Heart right ventricle (tissue), 16 donors: ENCODE measurements at regions of chr19 and their contacts with region 1.

Region 1: GRCh38 chr19:49391581-49392399 is 3.7 kb downstream of the KASH5 start:
- DNase-seq: peak; percentile 73 to 80
- ATAC-seq: peak; percentile 68 to 91 (median 84)
- H3K4me3 ChIP-seq: no peak overlapping the region
- H3K27ac ChIP-seq: no peak overlapping the region
- H3K4me1 ChIP-seq: peaks cover 0 to 6% (median 0%) of the 10 kb centered on the region in 9 donors
- H3K27me3 ChIP-seq: peaks cover 4 to 48% (median 9%) of the 10 kb centered on the region in 7 donors
- CTCF ChIP-seq: peak; percentile 65 to 90 (median 83)

Region 2: GRCh38 chr19:49436369-49437017 is 44.7 kb after region 1 on chr19:
- intact Hi-C with region 1: loop called in 2 of 10 experiments (anchors 5 kb)
- DNase-seq: no peak
- ATAC-seq: no peak
- H3K4me3 ChIP-seq: no peak overlapping the region
- H3K27ac ChIP-seq: no peak overlapping the region
- H3K4me1 ChIP-seq: peaks cover 0 to 6% (median 0%) of the 10 kb centered on the region in 9 donors
- H3K27me3 ChIP-seq: peaks cover 16 to 98% (median 94%) of the 10 kb centered on the region in 7 donors
- CTCF ChIP-seq: no peak

Region 3: DNA sequence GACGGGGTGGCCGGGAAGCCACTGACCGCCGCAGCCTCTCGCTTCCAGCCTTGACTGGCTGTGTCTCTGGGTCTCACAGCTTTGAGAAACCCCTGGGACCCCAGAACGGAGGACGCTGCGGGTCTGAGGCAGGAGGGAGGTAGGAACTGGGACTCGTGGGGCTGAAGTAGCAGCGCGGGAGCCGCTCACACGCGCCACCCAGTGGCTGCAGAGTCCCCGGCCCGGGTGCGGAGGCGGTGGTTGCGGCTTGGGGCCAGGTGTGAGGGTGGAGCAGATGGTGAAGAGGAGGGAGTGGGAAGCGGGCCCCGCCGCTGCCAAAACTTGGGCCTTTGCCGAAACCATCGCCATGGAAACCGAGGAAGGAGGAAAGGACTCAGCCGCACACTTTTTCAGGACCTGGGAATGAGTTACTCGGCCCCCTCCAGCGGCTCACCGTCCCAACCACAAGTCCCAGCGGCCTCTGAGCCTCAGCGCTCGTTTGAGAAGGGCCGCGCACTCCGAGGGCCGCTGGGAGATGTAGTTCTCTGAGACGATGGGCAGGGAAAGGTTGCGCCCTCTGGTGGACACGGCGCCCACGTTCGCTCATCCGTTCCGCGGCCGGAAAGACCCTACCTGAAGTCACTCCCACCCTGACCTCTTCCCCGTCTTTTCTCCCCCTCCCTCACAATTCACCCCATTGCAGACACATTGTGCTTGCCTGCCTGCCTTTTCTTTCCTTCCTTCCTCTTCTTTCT is 51.7 kb after region 1 on chr19:
- intact Hi-C with region 1: loop called (anchors 1 to 5 kb)
- DNase-seq: peak; percentile 94 to 96
- ATAC-seq: peak; percentile 86 to 95 (median 93)
- H3K4me3 ChIP-seq: peak overlapping the region; percentile 60 to 93 (median 69)
- H3K27ac ChIP-seq: peak overlapping the region; percentile 55 to 92 (median 86)
- H3K4me1 ChIP-seq: peaks cover 0 to 23% (median 6%) of the 10 kb centered on the region in 9 donors
- H3K27me3 ChIP-seq: peaks cover 8 to 40% (median 36%) of the 10 kb centered on the region in 7 donors
- CTCF ChIP-seq: peak; percentile 65 to 89 (median 80)

Region 4: DNA sequence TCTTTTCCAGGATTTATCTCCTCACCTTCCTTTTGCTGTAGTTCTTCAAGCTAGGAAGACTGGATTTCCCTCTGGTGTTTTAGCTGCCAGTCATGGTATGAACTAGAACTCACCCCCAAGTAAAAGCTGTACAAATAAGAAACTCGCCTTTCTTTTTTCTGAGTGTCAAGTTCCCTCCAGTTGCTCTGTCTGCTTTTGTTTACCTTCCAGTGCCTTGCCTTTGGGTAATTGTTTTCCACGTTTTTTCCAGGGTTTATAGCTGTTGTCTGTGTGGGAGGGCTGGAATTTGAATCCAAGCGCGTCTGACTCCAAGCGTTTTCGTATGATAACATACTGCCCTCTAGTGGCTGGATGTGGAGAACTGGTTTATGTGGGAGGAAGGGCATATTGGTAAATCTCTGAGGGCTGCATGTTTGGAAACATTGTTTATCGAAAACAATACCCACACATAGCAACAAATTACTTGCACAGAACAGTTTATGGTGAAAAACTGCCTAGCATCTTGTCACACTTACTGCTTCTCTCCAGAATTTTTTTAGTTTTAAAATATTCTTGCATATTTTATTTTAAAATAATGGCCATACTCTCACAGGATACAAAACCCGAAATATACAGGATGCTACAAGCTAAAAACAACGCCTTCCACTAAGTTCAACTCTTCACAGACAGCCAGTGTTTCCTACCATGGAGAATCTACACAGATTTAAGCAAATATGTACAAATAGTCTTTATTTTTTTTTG is 155.2 kb after region 1 on chr19:
- intact Hi-C with region 1: loop called in 2 of 10 experiments (anchors 5 to 10 kb)
- DNase-seq: peak in 1 of 2 donors; percentile 89
- ATAC-seq: peak; percentile 56 to 91 (median 83)
- H3K4me3 ChIP-seq: no peak overlapping the region
- H3K27ac ChIP-seq: no peak overlapping the region
- H3K4me1 ChIP-seq: peaks cover 0 to 16% (median 0%) of the 10 kb centered on the region in 9 donors
- H3K27me3 ChIP-seq: no peaks in the 10 kb centered on the region
- CTCF ChIP-seq: peak; percentile 52 to 91 (median 85)

Region 5: DNA sequence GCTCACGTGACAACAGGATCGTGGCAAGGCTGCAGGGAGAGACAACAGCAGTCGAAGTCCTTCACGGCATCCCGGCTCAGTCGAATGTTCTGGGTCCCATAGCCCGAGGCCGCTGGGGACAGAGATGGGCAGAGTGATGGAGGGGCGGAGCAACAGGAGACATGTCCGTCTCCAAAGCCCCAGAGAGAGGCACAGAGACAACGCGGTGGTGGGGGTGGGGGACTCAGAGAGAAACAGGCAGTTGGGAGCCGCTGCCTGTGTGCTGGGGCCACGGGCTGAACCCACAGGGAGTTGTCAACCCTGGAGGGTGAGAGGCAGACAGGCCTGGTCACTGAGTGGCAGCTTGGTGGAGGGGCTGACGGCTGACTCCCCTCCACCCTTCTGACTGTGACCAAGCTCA is 168.1 kb after region 1 on chr19:
- intact Hi-C with region 1: no loop called
- DNase-seq: peak in 1 of 2 donors; percentile 34
- ATAC-seq: peak in 3 of 8 donors; percentile 2 to 20 (median 5)
- H3K4me3 ChIP-seq: peak overlapping the region in 1 of 10 donors; percentile 33
- H3K27ac ChIP-seq: peak overlapping the region in 7 of 10 donors; percentile 7 to 62 (median 27)
- H3K4me1 ChIP-seq: peaks cover 0 to 51% (median 11%) of the 10 kb centered on the region in 9 donors
- H3K27me3 ChIP-seq: no peaks in the 10 kb centered on the region
- CTCF ChIP-seq: no peak

Region 6: DNA sequence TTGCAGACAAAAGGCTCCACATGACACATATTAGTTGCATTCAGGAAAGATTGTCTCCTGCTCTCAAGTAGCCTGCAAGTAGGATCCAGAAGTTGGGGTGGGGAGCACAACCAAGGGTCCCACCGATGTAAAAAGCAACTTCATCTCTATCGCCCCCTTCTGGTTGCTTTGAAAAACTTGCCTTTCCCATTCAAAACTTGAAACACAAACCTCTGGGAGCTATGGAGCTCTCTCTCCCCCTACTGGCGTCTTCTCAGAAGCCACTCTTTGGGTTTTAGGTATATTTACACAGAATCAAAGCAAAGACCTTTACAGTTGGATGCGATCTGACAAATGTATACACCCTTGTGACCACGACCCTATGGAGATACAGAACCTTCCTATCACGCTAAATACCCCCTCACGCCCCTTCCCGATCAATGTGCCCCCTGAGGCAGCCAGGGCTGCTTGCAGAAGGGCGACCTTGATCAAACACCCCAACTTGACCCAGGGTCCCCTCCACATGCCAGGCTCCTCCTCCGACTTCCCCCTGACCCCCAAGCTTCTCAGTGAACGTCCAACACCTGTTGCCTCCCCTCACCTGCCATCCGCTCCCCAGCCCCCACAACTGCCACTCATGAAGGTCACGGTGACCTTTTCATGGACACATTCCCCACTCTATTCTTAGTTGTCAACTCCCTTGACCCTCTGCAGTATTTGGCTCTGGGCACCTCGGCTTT is 178.5 kb after region 1 on chr19:
- intact Hi-C with region 1: loop called in 1 of 10 experiments (anchors 5 kb)
- DNase-seq: peak in 1 of 2 donors; percentile 74
- ATAC-seq: peak; percentile 58 to 84 (median 73)
- H3K4me3 ChIP-seq: no peak overlapping the region
- H3K27ac ChIP-seq: peak overlapping the region in 9 of 10 donors; percentile 19 to 83 (median 79)
- H3K4me1 ChIP-seq: peaks cover 8 to 48% (median 31%) of the 10 kb centered on the region in 9 donors
- H3K27me3 ChIP-seq: no peaks in the 10 kb centered on the region
- CTCF ChIP-seq: peak; percentile 95 to 99 (median 98)